ENCODE measurements at regions of chr11 and their contacts with region 1.

Region 1: GRCh38 chr11:85941380-85941973 is 86.3 kb downstream of the CCDC83 start:
- DNase-seq: peak; percentile 71
- H3K4me3 ChIP-seq: no peak overlapping the region
- H3K27ac ChIP-seq: no peak overlapping the region
- H3K4me1 ChIP-seq: peaks cover 12% of the 10 kb centered on the region
- H3K27me3 ChIP-seq: no peaks in the 10 kb centered on the region
- CTCF ChIP-seq: peak; percentile 76
- POLR2A ChIP-seq: no peak

Region 2: DNA sequence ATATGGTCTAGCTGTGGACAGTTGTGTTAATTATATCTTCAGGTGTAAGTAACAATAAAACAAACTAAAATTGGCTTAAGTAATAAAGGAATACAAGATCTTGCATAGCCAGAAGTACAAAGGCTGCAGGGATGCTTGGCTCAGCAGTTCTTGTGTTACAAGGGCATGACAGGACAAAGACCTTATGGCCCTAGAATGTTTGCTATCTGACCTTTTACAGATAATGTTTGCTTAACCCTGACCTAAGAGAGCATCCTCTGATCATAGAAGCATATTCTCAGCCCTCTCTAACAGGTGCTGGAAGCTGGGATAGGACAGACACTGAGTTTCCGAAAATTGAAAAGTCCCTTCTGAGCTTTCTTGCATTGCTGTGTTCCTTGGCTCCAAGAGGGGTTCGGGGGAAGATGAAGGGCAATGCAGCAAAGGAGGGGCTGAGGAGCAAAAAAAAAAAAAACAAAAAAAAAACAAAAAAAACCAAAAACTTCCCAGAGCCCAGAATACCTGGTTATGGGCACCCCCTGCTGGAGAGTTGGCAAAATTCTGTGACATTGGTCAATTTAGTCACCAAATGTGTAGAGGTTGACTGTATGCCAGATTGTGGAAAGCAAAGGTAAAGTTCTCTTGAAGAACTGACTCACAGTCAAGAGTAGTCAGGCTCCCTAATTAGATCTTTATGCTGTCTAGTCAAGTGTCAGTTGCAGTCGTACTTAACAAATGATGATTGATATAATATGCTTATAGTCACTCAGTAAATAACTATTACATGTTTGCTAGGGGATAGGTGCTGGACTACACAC is 350.2 kb after region 1 on chr11:
- CTCF ChIA-PET with region 1: interaction called, 11 read pairs
- POLR2A ChIA-PET with region 1: no interaction called
- dilution Hi-C with region 1: no loop called
- intact Hi-C with region 1: loop called (anchors 1 kb)
- DNase-seq: peak; percentile 49
- H3K4me3 ChIP-seq: no peak overlapping the region
- H3K27ac ChIP-seq: no peak overlapping the region
- H3K4me1 ChIP-seq: no peaks in the 10 kb centered on the region
- H3K27me3 ChIP-seq: peaks cover 0 to 3% of the 10 kb centered on the region in 2 experiments
- CTCF ChIP-seq: peak; percentile 59 to 68
- POLR2A ChIP-seq: no peak

Measured in endothelial cell of umbilical vein (primary cell).